ENCODE measurements at regions of chr20 and their contacts with region 1.

Region 1: DNA sequence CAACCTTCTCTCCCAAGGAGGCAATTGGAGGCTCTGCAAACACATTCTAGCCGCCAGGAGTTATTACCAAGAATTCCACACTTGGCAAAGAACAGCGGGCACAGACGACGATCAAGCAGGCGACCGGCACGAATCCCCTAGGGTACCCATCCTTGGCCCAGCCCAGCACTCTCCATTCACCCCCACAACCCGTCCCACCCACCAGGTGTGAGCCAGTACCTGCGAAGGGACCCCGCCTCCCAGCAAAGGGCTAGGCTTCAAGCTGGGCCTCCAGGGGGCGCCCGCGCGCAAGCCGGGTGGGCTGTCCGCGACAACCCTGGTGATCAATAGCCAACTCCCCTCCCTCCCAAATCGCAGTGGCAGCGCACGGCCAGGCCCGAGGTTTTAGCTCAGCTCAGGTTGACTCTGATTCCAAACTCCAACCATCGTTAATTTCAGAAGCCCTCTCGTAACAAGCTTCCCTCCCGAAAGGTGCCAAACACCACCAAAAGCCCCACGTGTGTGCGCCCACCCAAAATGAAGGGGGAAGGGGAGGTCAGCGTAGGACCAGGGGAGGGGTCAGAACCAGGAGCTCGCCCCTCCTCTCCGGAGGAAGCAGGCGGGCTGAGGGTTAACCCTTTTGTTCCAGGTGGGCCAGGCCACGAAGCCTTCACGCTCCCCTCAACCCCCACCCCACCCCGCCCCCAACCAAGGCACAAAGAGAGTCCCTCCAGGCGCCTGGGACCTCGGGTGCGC is 2.1 kb downstream of the SALL4 start:
- DNase-seq: peak; percentile 46
- H3K4me3 Mint-ChIP-seq: peak overlapping the region; percentile 60
- H3K27ac Mint-ChIP-seq: no peak overlapping the region
- H3K4me1 Mint-ChIP-seq: peaks cover 13% of the 10 kb centered on the region
- H3K27me3 Mint-ChIP-seq: peaks cover 57% of the 10 kb centered on the region

Region 2: DNA sequence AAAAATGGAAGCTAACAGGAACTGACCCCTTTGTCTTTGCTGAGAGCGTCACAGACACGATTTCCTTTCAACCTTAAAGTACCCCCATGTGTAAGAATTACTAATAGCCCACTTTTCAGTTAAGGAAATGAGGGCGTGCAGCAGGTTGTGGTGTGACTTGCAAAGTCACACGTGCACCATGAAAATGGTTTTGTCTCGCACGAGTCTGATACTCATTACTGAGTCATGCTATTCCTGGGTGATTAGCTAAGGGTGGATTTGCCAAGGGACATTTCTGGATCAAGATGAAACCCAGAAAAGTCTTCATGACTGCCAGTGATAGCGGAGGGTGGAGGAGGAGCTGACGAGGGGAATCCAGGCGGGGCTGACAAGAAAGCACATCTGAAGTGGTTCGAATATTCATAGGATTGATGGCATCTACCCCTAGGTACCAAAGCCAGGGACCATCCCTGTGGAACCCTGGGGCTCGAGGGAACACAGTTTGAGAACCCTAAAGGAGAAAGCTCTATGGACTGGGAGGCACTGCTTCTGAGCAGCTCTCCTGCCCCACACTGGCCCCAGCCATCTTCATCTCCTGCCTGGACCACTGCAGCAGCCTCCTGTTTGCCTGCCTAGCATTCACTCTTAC is 245.6 kb before region 1 on chr20:
- intact Hi-C with region 1: no loop called
- DNase-seq: no peak
- H3K4me3 Mint-ChIP-seq: no peak overlapping the region
- H3K27ac Mint-ChIP-seq: no peak overlapping the region
- H3K4me1 Mint-ChIP-seq: peaks cover 2% of the 10 kb centered on the region
- H3K27me3 Mint-ChIP-seq: peaks cover 21% of the 10 kb centered on the region

Region 3: DNA sequence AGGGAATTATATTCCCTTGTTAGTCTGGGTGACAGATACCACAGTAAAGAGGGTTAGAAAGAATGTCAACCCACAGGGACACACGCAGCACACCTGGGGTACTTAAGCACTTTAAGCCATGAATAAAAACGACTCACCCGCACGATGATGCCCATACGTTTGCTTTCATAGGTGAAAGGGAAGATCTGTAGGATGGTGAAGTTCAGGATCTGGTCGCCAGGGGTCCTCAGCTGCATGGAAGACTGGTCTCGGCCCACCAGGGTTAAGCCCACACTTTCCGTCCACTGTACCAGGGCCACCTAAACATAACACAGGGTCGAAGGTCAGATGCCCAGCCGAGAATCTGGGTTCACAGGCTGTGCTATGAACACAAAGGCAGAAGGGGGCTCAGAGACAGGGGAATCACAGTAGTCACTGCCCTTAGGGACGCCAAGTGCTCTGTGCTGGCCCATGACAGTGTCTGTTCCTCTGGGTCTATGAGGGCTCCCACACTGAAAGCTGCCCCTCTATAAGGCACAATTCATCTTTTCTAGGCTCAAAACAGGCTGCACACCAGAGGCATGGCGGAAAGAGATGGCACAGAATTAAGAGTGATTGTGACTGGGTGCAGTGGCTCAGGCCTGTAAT is 160.9 kb before region 1 on chr20:
- intact Hi-C with region 1: loop called (anchors 10 kb)
- DNase-seq: peak; percentile 28
- H3K4me3 Mint-ChIP-seq: no peak overlapping the region
- H3K27ac Mint-ChIP-seq: no peak overlapping the region
- H3K4me1 Mint-ChIP-seq: peaks cover 13% of the 10 kb centered on the region
- H3K27me3 Mint-ChIP-seq: peaks cover 2% of the 10 kb centered on the region

Region 4: GRCh38 chr20:51767010-51767558 is 33.1 kb before region 1 on chr20:
- intact Hi-C with region 1: loop called (anchors 5 kb)
- DNase-seq: peak; percentile 44
- H3K4me3 Mint-ChIP-seq: peak overlapping the region; percentile 65
- H3K27ac Mint-ChIP-seq: no peak overlapping the region
- H3K4me1 Mint-ChIP-seq: peaks cover 7% of the 10 kb centered on the region
- H3K27me3 Mint-ChIP-seq: peaks cover 32% of the 10 kb centered on the region

Region 5: DNA sequence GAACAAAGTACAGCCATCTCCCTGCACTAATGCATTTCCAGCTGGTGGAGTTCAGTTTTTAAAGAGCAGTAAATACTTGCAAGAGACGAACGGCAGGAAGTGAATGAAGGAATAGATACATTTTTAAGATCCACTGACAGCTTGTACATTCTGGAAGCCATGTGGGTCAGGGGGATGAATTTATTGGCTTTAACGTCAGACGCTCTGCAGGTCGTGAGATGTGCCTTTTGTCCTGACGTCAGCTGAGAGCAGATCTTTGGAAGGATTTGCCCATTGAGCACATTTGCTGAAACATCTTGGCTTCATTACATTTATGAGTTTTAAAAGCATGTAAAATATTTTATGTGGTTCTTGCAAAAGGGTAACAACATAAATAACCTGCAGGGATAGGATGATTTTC is 31.6 kb after region 1 on chr20:
- intact Hi-C with region 1: no loop called
- DNase-seq: no peak
- H3K4me3 Mint-ChIP-seq: no peak overlapping the region
- H3K27ac Mint-ChIP-seq: no peak overlapping the region
- H3K4me1 Mint-ChIP-seq: no peaks in the 10 kb centered on the region
- H3K27me3 Mint-ChIP-seq: peaks cover 2% of the 10 kb centered on the region

Region 6: DNA sequence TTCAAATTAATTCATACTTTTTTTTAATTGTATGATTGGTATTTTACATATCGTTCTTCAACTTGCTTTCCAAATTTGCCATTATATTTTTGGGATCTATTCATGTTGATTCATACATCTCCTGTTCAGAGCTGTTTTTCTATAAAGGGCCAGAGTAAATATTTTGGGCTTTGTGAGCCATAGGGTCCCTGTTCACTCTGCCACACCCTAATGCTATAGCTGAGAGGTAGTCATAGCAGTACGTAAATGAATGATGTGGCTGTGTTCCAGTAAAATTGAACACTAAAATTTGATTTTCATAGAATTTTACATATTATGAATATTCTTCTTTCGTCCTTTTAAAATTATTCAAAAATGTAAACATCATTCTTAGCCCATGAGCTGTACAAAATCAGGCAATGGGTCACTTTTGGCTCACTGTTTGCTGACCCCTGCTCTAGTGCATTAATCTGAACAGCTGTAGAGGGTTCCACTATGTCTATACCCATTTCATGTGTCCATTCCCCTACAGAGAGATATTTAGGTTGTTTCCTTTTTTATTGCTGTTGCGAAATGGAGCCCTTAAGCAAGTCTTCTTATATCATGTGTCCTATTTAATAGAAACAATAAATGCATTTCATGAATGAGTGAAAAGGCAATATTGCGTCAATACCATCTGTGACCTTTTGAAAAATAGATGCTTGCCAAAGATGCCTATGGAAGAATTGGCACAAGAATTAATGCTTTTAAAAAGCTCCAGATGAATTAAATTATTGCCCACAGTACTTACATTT is 138.5 kb after region 1 on chr20:
- intact Hi-C with region 1: no loop called
- DNase-seq: no peak
- H3K4me3 Mint-ChIP-seq: no peak overlapping the region
- H3K27ac Mint-ChIP-seq: no peak overlapping the region
- H3K4me1 Mint-ChIP-seq: no peaks in the 10 kb centered on the region
- H3K27me3 Mint-ChIP-seq: no peaks in the 10 kb centered on the region

Region 7: DNA sequence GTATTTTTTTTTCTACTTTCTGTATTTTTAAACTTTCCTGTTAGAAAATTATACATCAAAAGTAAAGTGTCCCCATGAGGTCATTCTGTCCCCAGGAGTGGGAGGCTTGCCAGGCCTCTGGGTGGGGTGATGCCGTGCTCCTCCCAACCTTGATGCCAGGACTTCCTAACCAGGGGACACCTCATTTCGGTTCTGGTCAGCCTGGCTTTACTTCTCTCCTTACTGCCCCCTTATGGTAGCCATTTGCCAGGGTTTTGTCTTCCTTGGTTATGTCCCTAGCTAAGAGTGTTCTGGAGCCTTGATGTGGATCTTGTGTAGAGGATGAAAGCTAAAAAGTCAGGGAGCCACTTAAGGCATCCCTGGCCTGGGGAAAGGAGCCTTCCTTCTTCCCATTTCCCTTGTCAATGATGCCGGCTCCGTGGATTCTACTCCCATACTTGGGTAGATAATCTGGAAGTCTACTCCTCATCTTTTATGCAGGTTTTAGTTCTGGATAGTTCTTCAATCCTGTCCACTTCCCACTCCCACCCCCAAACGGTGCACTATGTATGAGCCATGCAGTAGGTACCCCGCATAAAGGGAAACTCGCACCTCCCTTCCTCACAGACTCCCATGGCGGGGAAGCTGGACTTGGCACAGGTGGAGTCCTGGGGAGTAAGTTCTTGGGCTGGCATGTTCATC is 166.2 kb after region 1 on chr20:
- intact Hi-C with region 1: loop called (anchors 10 kb)
- DNase-seq: no peak
- H3K4me3 Mint-ChIP-seq: no peak overlapping the region
- H3K27ac Mint-ChIP-seq: no peak overlapping the region
- H3K4me1 Mint-ChIP-seq: no peaks in the 10 kb centered on the region
- H3K27me3 Mint-ChIP-seq: peaks cover 5% of the 10 kb centered on the region

Region 8: GRCh38 chr20:52083627-52084232 is 283.5 kb after region 1 on chr20:
- intact Hi-C with region 1: loop called (anchors 2 kb)
- DNase-seq: no peak
- H3K4me3 Mint-ChIP-seq: no peak overlapping the region
- H3K27ac Mint-ChIP-seq: no peak overlapping the region
- H3K4me1 Mint-ChIP-seq: peaks cover 12% of the 10 kb centered on the region
- H3K27me3 Mint-ChIP-seq: no peaks in the 10 kb centered on the region